ENCODE measurements at regions of chr17 and their contacts with region 1.

Region 1: GRCh38 chr17:28763804-28764266 is 20.0 kb downstream of the TRAF4 start:
- H3K4me3 ChIP-seq: no peak overlapping the region
- H3K27ac ChIP-seq: no peak overlapping the region
- H3K4me1 ChIP-seq: no peaks in the 10 kb centered on the region; the same call in 1 of the 2 replicates
- CTCF ChIP-seq: peak; percentile 51; the same call in 1 of the 2 replicates

Region 2: DNA sequence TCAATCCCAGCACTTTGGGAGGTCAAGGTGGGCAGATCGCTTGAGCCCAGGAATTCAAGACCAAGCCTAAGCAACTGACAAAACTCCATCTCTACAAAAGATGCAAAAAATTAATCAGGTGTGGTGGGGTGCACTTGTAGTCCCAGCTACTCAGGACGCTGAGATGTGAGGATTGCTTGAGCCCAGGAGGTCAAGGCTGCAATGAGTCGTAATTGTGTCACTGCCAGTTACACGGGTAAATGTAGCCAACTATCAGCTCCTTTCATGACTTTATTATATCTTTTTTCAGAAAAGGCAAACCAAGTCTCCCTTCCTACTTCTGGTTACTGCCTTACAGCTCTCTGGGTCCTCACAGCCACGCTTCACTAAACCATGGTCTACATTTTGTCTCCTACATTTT is 106.1 kb before region 1 on chr17:
- CTCF ChIA-PET with region 1: no interaction called
- POLR2A ChIA-PET with region 1: no interaction called
- H3K4me3 ChIP-seq: no peak overlapping the region
- H3K27ac ChIP-seq: no peak overlapping the region
- H3K4me1 ChIP-seq: peaks cover 3% of the 10 kb centered on the region; the same call in 1 of the 2 replicates
- CTCF ChIP-seq: no peak

Region 3: DNA sequence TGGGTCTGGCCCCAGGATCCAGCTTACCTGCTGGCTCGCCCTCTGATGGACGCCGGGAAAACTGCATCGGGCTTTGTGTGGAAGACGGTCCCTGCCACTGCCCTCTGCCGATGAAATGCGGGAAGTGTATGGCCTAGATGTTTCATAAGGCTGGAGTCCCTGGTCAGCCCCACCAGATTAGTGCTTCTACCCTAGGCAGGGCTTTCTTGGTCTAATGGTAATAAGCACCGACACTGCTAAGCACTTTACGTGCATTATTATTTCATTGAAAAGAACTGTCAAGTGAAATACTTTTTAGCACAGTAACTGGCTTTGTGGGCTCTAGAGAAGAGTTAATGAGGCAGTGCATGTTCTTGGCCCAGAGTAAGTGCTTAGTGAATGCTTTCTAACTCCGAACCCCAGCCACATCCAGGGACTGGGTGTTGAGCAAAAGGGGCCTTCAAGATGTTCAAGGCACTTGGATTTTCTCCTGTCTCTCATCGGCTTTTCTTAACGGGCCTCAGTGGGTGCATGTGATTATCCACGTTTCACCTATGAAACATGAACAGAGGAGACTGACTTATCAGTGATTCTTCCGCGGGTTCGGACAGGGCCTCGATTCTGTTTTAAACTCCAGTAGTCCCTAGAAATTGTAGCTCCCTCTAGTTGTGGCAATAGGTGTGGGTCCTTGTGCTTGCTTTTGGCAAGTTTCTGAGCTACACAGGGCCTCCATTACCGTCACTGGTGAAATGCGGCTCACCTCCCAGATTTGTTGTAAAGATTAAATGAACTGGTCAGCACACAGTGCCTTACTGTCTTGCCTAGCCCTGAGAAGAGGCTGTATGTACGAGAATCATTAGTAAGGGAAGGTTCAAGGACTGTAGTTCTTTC is 13.4 kb before region 1 on chr17:
- CTCF ChIA-PET with region 1: interaction called, 175 read pairs
- POLR2A ChIA-PET with region 1: interaction called, 10 read pairs
- H3K4me3 ChIP-seq: no peak overlapping the region
- H3K27ac ChIP-seq: 0 out of 2 replicates have a peak overlapping the region, but pooled peaks have one; percentile 12
- H3K4me1 ChIP-seq: peaks cover 8% of the 10 kb centered on the region; the same call in 1 of the 2 replicates
- CTCF ChIP-seq: peak; percentile 96

Region 4: GRCh38 chr17:28812091-28812747 is 48.4 kb after region 1 on chr17:
- CTCF ChIA-PET with region 1: interaction called, 68 read pairs
- POLR2A ChIA-PET with region 1: interaction called, 6 read pairs
- H3K4me3 ChIP-seq: peak overlapping the region; percentile 94
- H3K27ac ChIP-seq: peak overlapping the region; percentile 81
- H3K4me1 ChIP-seq: peaks cover 22% of the 10 kb centered on the region
- CTCF ChIP-seq: no peak

Region 5: DNA sequence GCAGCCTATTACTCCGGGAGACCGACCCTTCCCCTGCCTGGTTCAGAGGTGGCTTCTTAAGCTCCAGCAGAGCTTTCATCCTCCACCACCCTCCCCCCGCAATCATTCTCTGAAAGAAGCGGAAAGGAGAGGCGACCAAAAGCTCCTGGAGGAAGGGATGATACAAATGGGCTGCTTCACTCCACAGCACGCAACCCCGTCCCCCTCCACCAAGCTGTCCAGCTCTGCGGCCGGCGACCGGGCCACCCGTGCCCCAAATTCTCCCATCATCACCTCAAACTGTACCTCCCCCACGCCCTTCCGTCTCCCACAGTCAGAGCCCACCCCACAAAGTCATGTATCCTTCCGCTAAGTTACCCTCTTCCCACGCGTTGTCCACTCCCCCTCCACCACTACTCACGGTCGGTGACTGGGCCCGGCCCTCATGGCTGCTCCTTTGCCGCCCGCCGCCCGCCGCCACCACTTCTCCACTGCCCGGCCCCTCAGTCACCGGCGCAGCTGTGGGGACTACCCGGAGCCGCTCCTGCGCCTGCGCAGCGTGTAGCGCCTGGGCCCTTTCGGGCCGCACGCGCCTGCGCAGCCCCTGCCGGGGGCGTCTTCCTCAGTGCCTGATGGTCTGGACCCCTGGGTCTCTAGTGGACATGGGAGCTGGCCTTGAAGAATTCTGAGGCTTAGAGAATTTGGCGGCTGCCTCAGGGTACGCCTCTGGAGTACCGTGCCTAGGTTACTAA is 78.6 kb after region 1 on chr17 and contains the start of gene FAM222B:
- CTCF ChIA-PET with region 1: interaction called, 52 read pairs
- POLR2A ChIA-PET with region 1: interaction called, 21 read pairs
- H3K4me3 ChIP-seq: peak within 1 kb of the TSS; percentile 95
- H3K27ac ChIP-seq: peak within 1 kb of the TSS; percentile 77
- H3K4me1 ChIP-seq: 0 out of 2 replicates have a peak, but pooled peaks cover 2% of the 10 kb centered on the region
- CTCF ChIP-seq: peak; percentile 31

Region 6: DNA sequence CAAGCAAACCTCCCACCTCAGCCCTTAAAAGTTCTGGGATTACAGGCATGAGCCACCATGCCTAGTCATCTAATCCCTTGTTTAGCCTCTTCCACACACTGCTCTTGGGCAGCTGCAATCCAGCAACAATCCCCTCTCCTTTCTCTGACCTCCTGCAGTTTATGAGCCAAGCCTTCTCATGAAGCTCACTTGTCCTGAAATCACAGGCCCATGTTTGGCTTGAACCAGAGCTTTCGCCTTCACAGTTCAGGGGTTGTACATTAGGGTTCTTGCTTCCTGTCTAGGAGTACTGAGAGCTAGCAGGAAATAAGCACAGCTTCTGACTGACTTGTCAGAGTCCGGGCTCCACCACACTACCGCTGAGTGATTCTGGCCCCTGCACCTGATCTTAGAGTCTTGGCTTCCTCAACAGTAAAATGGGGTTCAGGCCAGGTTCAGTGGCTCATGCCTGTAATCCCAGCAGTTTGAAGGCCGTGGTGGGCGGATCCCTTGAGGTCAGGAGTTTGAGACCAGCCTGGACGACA is 107.3 kb after region 1 on chr17:
- CTCF ChIA-PET with region 1: interaction called, 64 read pairs
- POLR2A ChIA-PET with region 1: no interaction called
- H3K4me3 ChIP-seq: no peak overlapping the region
- H3K27ac ChIP-seq: no peak overlapping the region
- H3K4me1 ChIP-seq: no peaks in the 10 kb centered on the region
- CTCF ChIP-seq: no peak

Region 7: GRCh38 chr17:28908640-28909167 is 144.9 kb after region 1 on chr17:
- CTCF ChIA-PET with region 1: interaction called, 142 read pairs
- POLR2A ChIA-PET with region 1: interaction called, 3 read pairs
- H3K4me3 ChIP-seq: no peak overlapping the region
- H3K27ac ChIP-seq: no peak overlapping the region
- H3K4me1 ChIP-seq: no peaks in the 10 kb centered on the region
- CTCF ChIP-seq: no peak

Measured in HEK293 (cell line).